SK-N-SH (cell line): ENCODE measurements at regions of chr17 and their contacts with region 1.

Region 1: GRCh38 chr17:29111816-29112499 is 68.2 kb downstream of the MYO18A start:
- DNase-seq: peak; percentile 82
- H3K4me3 ChIP-seq: no peak overlapping the region
- H3K27ac ChIP-seq: no peak overlapping the region
- H3K4me1 ChIP-seq: peaks cover 5 to 39% of the 10 kb centered on the region in 2 experiments; a peak in 2 of 4 replicates
- H3K27me3 ChIP-seq: no peaks in the 10 kb centered on the region
- CTCF ChIP-seq: peak; percentile 91
- EP300 ChIP-seq: no peak
- RAD21 ChIP-seq: peak; percentile 94

Region 2: DNA sequence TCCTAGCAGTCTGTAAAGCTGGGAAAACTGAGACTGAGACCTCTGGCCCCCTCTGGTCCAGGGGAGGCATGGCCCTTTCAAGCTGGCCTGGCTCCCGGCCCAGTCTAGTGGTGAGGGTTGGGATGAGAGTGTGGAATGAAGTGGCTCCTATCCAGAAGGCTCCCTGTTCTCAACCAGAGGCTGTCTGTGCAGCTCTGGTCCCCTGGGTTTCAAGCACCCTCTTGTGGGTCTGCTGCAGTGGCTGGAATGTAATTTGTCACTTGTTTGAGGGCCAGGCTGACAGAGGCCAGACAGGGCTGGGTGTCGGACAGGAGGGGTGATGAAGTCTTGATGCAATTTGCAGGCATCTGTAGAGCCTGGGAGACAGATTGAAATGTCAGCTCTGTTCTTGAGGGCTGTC is 138.5 kb before region 1 on chr17:
- CTCF ChIA-PET with region 1: interaction called, 341 read pairs
- POLR2A ChIA-PET with region 1: interaction called, 7 read pairs
- DNase-seq: peak; percentile 86
- H3K4me3 ChIP-seq: no peak overlapping the region
- H3K27ac ChIP-seq: peak overlapping the region in 1 of 2 experiments; percentile 96; a peak in 2 of 4 replicates
- H3K4me1 ChIP-seq: peaks cover 0 to 85% of the 10 kb centered on the region in 2 experiments; a peak in 3 of 4 replicates
- H3K27me3 ChIP-seq: peaks cover 4% of the 10 kb centered on the region; the same call in 1 of the 2 replicates
- CTCF ChIP-seq: no peak
- EP300 ChIP-seq: peak in 1 of 2 experiments; percentile 95; a peak in 2 of 4 replicates
- RAD21 ChIP-seq: peak; percentile 56

Region 3: DNA sequence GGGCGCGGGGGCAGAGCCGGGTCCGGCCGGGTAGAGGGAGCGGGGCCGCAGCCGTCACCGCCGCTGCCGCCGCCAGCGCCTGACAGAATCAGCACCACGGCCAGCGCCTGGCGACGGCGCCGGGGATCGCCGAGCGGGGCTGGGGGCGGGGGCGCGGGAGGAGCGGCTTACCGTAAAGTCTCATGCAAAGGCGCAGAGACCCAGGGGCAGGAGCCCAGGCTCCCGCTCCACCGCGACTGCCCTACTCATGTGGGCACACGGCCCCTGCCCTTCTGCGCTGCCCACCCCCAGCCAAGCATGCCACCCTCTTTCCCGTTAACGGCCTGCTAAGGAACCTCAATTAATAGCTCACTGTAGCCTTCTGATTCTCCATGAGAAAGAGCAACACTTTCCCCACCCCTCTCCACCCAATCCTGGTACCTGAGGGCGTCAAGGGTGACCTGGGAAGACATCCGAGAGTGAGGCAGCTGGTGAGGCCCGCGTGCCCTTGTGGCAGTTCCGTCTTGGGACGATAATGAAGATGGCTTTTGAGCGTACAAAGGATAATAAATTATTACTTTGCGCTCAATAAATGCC is 105.9 kb before region 1 on chr17 and contains the start of gene SEZ6:
- CTCF ChIA-PET with region 1: interaction called, 53 read pairs
- POLR2A ChIA-PET with region 1: no interaction called
- DNase-seq: peak; percentile 94
- H3K4me3 ChIP-seq: peak within 1 kb of the TSS in 1 of 2 experiments; percentile 43; a peak in 3 of 4 replicates
- H3K27ac ChIP-seq: peak within 1 kb of the TSS in 1 of 2 experiments; percentile 28; a peak in 1 of 4 replicates
- H3K4me1 ChIP-seq: peaks cover 7 to 27% of the 10 kb centered on the region in 2 experiments; a peak in 2 of 4 replicates
- H3K27me3 ChIP-seq: peaks cover 35% of the 10 kb centered on the region
- CTCF ChIP-seq: no peak
- EP300 ChIP-seq: peak; percentile 9 to 25; a peak in 1 of 4 replicates
- RAD21 ChIP-seq: no peak
- polyA plus RNA-seq, gene SEZ6: 0.12 and 0.37 TPM in 2 replicates

Region 4: DNA sequence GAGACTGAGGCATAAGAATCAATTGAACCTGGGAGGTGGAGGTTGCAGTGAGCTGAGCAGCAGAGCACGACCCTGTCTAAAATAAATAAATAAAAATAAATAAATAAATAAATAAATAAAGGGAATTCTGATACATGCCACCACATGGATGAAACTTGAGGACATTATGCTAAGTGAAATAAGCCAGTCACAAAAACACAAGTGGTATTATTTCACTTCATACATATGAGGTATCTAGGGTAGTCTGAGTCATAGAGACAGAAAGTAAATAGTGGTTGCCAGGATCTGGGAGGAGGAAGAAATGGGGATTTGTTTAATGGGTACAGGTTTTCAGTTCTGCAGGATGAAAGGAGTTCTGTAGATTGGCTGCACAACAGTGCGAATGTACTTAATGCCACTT is 52.7 kb before region 1 on chr17:
- CTCF ChIA-PET with region 1: interaction called, 16 read pairs
- POLR2A ChIA-PET with region 1: no interaction called
- DNase-seq: no peak
- H3K4me3 ChIP-seq: no peak overlapping the region
- H3K27ac ChIP-seq: no peak overlapping the region
- H3K4me1 ChIP-seq: peaks cover 7 to 45% of the 10 kb centered on the region in 2 experiments; a peak in 3 of 4 replicates
- H3K27me3 ChIP-seq: no peaks in the 10 kb centered on the region
- CTCF ChIP-seq: no peak
- EP300 ChIP-seq: no peak
- RAD21 ChIP-seq: no peak

Region 5: GRCh38 chr17:29084541-29085146 is 27.3 kb before region 1 on chr17:
- CTCF ChIA-PET with region 1: interaction called, 31 read pairs
- POLR2A ChIA-PET with region 1: no interaction called
- DNase-seq: peak; percentile 90
- H3K4me3 ChIP-seq: no peak overlapping the region
- H3K27ac ChIP-seq: peak overlapping the region in 1 of 2 experiments; percentile 89; a peak in 2 of 4 replicates
- H3K4me1 ChIP-seq: peaks cover 0 to 17% of the 10 kb centered on the region in 2 experiments; a peak in 2 of 4 replicates
- H3K27me3 ChIP-seq: no peaks in the 10 kb centered on the region
- CTCF ChIP-seq: no peak
- EP300 ChIP-seq: peak in 1 of 2 experiments; percentile 51; a peak in 1 of 4 replicates
- RAD21 ChIP-seq: no peak; the same call in 1 of the 2 replicates

Region 6: GRCh38 chr17:29124117-29124924 is 12.4 kb after region 1 on chr17:
- CTCF ChIA-PET with region 1: interaction called, 136 read pairs
- POLR2A ChIA-PET with region 1: no interaction called
- DNase-seq: peak; percentile 80
- H3K4me3 ChIP-seq: no peak overlapping the region; a peak in 1 of 4 replicates
- H3K27ac ChIP-seq: no peak overlapping the region
- H3K4me1 ChIP-seq: peaks cover 0 to 3% of the 10 kb centered on the region in 2 experiments; a peak in 1 of 4 replicates
- H3K27me3 ChIP-seq: no peaks in the 10 kb centered on the region
- CTCF ChIP-seq: peak; percentile 76
- EP300 ChIP-seq: no peak
- RAD21 ChIP-seq: peak; percentile 95

Region 7: GRCh38 chr17:29357821-29358232 is 245.9 kb after region 1 on chr17:
- CTCF ChIA-PET with region 1: no interaction called
- POLR2A ChIA-PET with region 1: no interaction called
- DNase-seq: no peak
- H3K4me3 ChIP-seq: no peak overlapping the region
- H3K27ac ChIP-seq: no peak overlapping the region
- H3K4me1 ChIP-seq: peaks cover 0 to 11% of the 10 kb centered on the region in 2 experiments; a peak in 1 of 4 replicates
- H3K27me3 ChIP-seq: no peaks in the 10 kb centered on the region
- CTCF ChIP-seq: no peak
- EP300 ChIP-seq: no peak
- RAD21 ChIP-seq: no peak

Region 8: GRCh38 chr17:29617125-29617480 is 505.1 kb after region 1 on chr17:
- CTCF ChIA-PET with region 1: no interaction called
- POLR2A ChIA-PET with region 1: no interaction called
- DNase-seq: peak; percentile 88
- H3K4me3 ChIP-seq: no peak overlapping the region
- H3K27ac ChIP-seq: no peak overlapping the region; a peak in 1 of 4 replicates
- H3K4me1 ChIP-seq: peaks cover 20 to 44% of the 10 kb centered on the region in 2 experiments; a peak in 3 of 4 replicates
- H3K27me3 ChIP-seq: no peaks in the 10 kb centered on the region
- CTCF ChIP-seq: peak; percentile 47
- EP300 ChIP-seq: no peak
- RAD21 ChIP-seq: peak; percentile 31